Activated CD4-positive, alpha-beta T cell treated with anti-CD3 and anti-CD28 coated beads for 36 hours (primary cell): ENCODE measurements at regions of chr2 and their contacts with region 1.

Region 1: DNA sequence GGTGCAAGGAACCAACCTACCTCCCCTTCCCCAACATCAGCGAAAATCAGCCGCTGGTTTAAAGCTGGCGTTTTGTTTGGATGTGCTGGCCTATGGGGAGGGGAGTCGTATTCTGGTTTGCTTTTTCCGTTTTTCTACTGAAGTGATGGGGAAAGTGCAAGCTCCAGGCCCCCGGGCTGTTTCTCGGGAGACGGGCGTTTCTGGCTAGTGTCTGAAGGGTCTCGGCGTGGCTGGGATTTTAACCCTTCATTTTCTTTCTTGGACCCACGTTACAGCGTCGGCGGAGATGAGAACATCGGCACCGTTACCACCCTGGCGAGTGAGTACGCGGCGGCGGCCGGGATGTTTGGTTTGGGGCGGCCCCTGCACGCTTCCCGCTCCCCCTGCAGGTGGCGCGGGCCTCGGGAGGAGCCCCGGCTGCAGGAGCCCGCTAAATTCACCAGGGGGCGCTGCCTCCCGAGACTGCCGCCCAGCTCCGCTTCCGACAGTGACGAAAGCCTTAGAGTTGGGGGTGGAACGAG is 70.7 kb downstream of the PLB1 start:
- DNase-seq: peak; percentile 96
- ATAC-seq: peak; percentile 99
- H3K4me3 Mint-ChIP-seq: peak overlapping the region; percentile 81
- H3K27ac Mint-ChIP-seq: peak overlapping the region; percentile 87
- H3K4me1 Mint-ChIP-seq: peaks cover 18% of the 10 kb centered on the region
- H3K27me3 Mint-ChIP-seq: peaks cover 2% of the 10 kb centered on the region

Region 2: DNA sequence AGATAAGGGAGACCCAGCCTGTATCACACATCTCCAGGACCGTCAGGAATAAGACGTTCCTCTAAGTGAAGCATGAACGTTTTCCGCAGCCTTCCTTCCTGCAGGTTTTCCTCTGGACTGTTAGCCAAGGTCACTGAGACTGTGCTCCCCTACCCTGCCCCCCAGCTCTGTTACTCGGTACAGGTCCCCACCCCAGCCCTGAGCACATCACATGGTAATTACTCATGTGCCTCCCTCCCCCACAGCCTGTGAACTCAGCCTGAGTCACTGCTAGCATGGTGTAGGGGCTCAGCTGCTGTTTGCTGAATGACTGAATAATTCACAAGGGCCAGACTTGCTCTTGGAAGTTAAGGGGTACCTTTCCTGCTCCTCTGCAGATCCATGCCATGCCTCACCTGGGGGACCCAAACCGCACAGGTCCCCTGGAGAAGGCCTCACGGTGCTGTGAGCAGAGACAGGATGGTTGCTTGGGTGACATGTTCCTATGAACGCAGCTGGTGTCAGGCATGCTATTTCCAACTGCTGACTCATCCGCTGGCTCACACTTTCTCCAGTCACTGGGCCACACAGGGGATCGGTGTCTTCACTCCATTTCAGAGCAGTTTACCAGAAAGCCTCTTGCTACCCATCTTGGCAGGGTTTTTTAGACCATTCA is 17.4 kb after region 1 on chr2:
- CTCF ChIA-PET with region 1: interaction called, 4 read pairs
- POLR2A ChIA-PET with region 1: no interaction called
- intact Hi-C with region 1: loop called in 1 of 2 experiments (anchors 1 kb)
- DNase-seq: peak; percentile 89
- ATAC-seq: peak; percentile 96
- H3K4me3 Mint-ChIP-seq: peak overlapping the region; percentile 7
- H3K27ac Mint-ChIP-seq: peak overlapping the region; percentile 82
- H3K4me1 Mint-ChIP-seq: peaks cover 45% of the 10 kb centered on the region
- H3K27me3 Mint-ChIP-seq: peaks cover 2% of the 10 kb centered on the region

Region 3: DNA sequence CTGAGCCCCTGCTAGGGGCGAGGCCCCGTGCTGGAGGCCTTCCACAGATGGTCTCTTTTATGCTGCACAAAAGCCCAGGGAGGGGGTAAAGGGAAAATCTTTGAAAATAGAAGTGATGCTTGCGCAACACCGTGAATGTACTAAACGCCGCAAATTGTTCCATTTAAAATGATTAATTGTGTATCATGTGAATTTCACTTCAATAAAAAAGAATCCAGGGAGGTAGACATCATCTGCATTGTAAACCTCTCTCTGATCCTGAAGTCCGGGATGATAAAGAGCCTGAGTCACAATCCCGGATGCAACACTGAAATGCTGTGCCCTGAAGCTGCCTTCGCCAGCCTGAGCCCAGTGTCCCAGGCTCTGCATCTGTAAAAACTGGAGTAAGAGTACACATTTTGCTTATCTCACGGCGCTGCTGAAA is 77.3 kb after region 1 on chr2:
- CTCF ChIA-PET with region 1: no interaction called
- POLR2A ChIA-PET with region 1: no interaction called
- intact Hi-C with region 1: no loop called
- DNase-seq: no peak
- ATAC-seq: no peak
- H3K4me3 Mint-ChIP-seq: no peak overlapping the region
- H3K27ac Mint-ChIP-seq: no peak overlapping the region
- H3K4me1 Mint-ChIP-seq: peaks cover 17% of the 10 kb centered on the region
- H3K27me3 Mint-ChIP-seq: no peaks in the 10 kb centered on the region

Region 4: DNA sequence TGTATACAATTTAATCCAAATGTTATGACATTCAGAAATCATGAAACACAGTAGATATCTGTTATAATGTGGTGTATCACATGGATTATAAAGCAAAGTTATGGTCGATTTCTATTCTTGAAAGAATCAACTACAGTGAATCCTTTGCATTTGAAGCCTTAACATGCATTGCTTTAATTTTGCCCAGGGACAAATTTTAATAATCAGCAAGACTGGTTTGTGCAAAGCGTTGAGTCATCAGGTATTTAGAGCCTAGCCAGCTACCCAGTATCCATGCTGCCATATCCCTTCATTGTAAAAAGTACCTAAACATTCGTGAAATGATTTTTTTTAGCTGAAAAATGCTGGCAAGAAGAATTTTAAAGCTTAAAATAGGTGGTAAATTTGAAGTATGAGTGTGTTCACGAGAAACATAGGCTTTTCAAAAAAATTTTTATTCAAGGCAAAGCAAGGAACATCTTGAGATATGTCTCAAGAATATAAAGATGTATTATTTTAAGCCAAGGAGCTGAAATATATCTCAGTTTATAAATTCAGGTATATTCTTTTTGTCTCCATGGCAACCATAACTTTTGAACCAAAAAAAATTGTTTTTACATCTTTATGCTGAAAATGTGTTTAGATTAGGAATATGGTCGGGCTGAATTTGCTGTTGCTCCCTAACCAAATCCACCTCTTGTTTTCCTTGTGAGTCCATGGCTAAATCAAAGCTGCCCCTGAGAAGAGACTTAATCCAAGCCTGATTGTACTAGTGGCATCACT is 235.3 kb after region 1 on chr2:
- CTCF ChIA-PET with region 1: interaction called, 12 read pairs
- POLR2A ChIA-PET with region 1: no interaction called
- intact Hi-C with region 1: no loop called
- DNase-seq: no peak
- ATAC-seq: no peak
- H3K4me3 Mint-ChIP-seq: no peak overlapping the region
- H3K27ac Mint-ChIP-seq: no peak overlapping the region
- H3K4me1 Mint-ChIP-seq: peaks cover 7% of the 10 kb centered on the region
- H3K27me3 Mint-ChIP-seq: no peaks in the 10 kb centered on the region

Region 5: GRCh38 chr2:28821295-28821958 is 254.8 kb after region 1 on chr2:
- CTCF ChIA-PET with region 1: interaction called, 11 read pairs
- POLR2A ChIA-PET with region 1: no interaction called
- intact Hi-C with region 1: loop called in 1 of 2 experiments (anchors 1 kb)
- DNase-seq: peak; percentile 72
- ATAC-seq: peak; percentile 88
- H3K4me3 Mint-ChIP-seq: no peak overlapping the region
- H3K27ac Mint-ChIP-seq: no peak overlapping the region
- H3K4me1 Mint-ChIP-seq: peaks cover 7% of the 10 kb centered on the region
- H3K27me3 Mint-ChIP-seq: peaks cover 2% of the 10 kb centered on the region

Region 6: DNA sequence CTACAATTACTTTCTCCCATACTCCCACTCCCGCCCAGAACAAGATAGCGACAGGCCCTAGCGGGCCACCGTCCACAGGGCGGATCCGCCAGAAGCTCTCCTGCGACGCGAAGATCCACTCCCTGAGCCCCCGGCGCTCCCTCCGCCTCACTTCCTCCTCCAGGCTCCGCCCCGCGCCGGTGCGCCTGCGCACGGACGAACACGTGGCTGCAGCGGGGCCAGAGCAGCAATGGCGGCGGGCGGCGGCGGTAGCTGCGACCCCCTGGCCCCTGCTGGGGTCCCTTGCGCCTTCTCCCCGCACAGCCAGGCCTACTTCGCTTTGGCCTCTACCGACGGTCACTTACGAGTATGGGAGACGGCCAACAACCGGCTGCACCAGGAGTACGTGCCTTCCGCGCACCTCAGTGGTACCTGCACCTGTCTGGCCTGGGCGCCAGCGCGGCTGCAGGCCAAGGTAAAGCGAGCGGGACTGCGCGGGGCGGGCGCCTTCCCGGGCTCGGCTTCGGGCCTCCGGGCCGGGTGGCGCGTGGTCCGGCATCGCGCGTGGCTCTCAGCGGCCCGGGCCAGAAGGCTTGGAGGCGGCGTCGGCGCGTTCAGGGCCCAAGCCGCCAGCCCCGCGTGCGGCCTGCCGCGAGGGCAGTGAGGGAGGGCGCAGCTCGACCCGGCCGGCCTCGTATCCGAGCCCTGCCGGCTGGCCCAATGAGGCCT is 328.0 kb after region 1 on chr2 and contains the start of gene WDR43:
- CTCF ChIA-PET with region 1: interaction called, 4 read pairs
- POLR2A ChIA-PET with region 1: no interaction called
- intact Hi-C with region 1: loop called in 1 of 2 experiments (anchors 1 kb)
- DNase-seq: peak; percentile 99
- ATAC-seq: peak; percentile 94
- H3K4me3 Mint-ChIP-seq: peak within 1 kb of the TSS; percentile 97
- H3K27ac Mint-ChIP-seq: peak within 1 kb of the TSS; percentile 95
- H3K4me1 Mint-ChIP-seq: peaks cover 32% of the 10 kb centered on the region
- H3K27me3 Mint-ChIP-seq: no peaks in the 10 kb centered on the region
- total RNA-seq, gene WDR43: 109 to 170 TPM

Region 7: GRCh38 chr2:29014811-29015421 is 448.3 kb after region 1 on chr2:
- CTCF ChIA-PET with region 1: no interaction called
- POLR2A ChIA-PET with region 1: no interaction called
- intact Hi-C with region 1: loop called in 1 of 2 experiments (anchors 5 kb)
- DNase-seq: peak; percentile 80
- ATAC-seq: peak; percentile 82
- H3K4me3 Mint-ChIP-seq: peak overlapping the region; percentile 75
- H3K27ac Mint-ChIP-seq: peak overlapping the region; percentile 94
- H3K4me1 Mint-ChIP-seq: peaks cover 78% of the 10 kb centered on the region
- H3K27me3 Mint-ChIP-seq: no peaks in the 10 kb centered on the region